Right ventricle myocardium inferior (tissue), 1 donor: ENCODE measurements at regions of chr20 and their contacts with region 1.

Region 1: GRCh38 chr20:50731055-50731871 is at the start of gene PARD6B:
- DNase-seq: peak; percentile 99
- ATAC-seq: peak; percentile 97
- total RNA-seq, gene PARD6B: 5.6 TPM

Region 2: GRCh38 chr20:50115591-50116372 is 615.5 kb before region 1 on chr20:
- intact Hi-C with region 1: loop called (anchors 10 kb)
- DNase-seq: peak; percentile 99
- ATAC-seq: peak; percentile 92

Region 3: GRCh38 chr20:50655311-50655880 is 75.9 kb before region 1 on chr20:
- intact Hi-C with region 1: loop called (anchors 5 kb)
- DNase-seq: peak; percentile 87
- ATAC-seq: peak; percentile 87